ENCODE measurements at regions of chr18 and their contacts with region 1.

Region 1: DNA sequence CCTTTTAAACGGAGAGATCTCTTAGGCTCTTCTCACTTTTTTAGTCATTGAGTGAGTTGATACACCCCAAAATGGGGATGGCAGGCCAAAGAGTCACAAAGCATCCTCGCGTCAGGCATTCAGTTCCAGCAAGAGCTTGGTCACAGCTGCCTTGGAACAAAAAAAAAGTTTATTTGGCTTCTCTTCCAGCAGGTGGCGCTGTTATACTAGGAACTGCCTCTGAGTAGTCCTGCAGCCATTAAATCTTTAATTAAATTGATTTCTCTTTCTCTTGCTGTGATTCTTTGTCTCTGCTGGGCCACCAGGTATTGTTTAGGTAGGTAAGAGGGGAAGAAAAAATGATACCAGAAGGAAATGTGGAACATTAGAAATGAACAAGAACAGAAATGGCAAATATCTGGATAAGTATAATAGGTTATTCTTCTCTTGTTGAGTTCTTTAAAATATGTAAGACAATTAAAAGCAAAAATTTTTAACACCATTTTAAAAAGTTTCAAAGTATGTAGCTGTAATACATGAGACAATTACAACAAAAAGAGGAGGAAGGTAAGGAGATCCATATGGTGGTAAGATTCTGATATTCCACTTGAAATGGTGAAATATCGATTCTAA is 175.1 kb downstream of the GALNT1 start:
- DNase-seq: peak; percentile 56
- H3K4me3 ChIP-seq: no peak overlapping the region
- H3K27ac ChIP-seq: no peak overlapping the region
- H3K4me1 ChIP-seq: no peaks in the 10 kb centered on the region
- CTCF ChIP-seq: peak; percentile 80

Region 2: DNA sequence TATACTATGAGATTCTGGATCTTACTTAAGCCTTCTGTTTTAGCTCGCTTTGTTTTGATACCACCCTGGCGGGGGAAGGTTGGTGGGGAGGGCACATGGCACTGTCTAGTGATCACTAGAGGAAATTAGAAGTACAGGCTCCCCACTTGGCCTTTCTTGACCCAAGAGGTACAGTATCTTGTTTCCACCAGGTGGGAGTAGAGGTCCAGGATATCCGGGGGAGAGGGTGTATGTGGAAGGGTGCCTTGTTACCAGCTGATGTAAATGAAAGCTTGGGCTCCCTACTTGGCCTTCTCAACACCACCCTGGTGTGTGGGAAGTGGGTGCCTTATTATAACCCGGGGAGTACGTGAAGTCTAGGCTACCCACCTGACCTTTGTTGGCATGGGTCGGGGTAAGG is 167.6 kb before region 1 on chr18:
- CTCF ChIA-PET with region 1: no interaction called
- POLR2A ChIA-PET with region 1: no interaction called
- intact Hi-C with region 1: loop called (anchors 1 kb)
- DNase-seq: peak; percentile 53
- H3K4me3 ChIP-seq: no peak overlapping the region
- H3K27ac ChIP-seq: no peak overlapping the region
- H3K4me1 ChIP-seq: peaks cover 46% of the 10 kb centered on the region
- CTCF ChIP-seq: peak; percentile 57

Region 3: GRCh38 chr18:36015629-36016028 is 259.0 kb after region 1 on chr18:
- CTCF ChIA-PET with region 1: no interaction called
- POLR2A ChIA-PET with region 1: no interaction called
- intact Hi-C with region 1: loop called (anchors 5 kb)
- DNase-seq: peak; percentile 58
- H3K4me3 ChIP-seq: no peak overlapping the region
- H3K27ac ChIP-seq: peak overlapping the region; percentile 6
- H3K4me1 ChIP-seq: peaks cover 20% of the 10 kb centered on the region
- CTCF ChIP-seq: no peak

Region 4: DNA sequence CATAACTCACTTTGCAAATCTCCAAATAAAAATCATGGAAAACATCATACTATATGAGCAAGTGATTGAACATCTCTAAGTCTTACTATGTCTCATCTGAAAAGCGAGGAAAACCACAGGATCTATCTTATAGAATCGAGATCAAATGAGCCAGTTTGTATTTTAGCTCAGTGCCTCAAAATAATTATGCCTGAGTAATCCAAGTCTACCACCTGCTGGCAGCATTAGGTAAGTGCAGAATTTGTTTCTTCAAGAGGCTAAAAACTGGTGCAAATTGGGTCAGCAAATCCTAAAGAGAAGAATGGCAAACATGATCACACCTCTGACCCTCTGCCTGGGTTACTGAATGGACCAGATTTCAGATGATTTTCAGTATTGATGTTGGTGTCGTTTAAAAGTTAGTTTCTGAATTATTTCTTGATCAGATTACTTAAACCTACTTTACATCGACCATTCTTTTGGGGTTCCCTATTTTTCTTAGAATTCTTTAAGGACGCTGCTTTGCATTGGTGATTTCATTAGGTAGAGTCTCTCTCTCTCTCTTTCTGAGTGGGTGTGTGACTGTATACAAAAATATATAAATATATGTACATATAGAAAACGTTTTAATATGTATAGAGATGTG is 528.2 kb after region 1 on chr18:
- CTCF ChIA-PET with region 1: no interaction called
- POLR2A ChIA-PET with region 1: no interaction called
- intact Hi-C with region 1: loop called (anchors 5 kb)
- DNase-seq: peak; percentile 52
- H3K4me3 ChIP-seq: no peak overlapping the region
- H3K27ac ChIP-seq: no peak overlapping the region
- H3K4me1 ChIP-seq: no peaks in the 10 kb centered on the region
- CTCF ChIP-seq: peak; percentile 81